ENCODE measurements at regions of chr10 and their contacts with region 1.

Region 1: DNA sequence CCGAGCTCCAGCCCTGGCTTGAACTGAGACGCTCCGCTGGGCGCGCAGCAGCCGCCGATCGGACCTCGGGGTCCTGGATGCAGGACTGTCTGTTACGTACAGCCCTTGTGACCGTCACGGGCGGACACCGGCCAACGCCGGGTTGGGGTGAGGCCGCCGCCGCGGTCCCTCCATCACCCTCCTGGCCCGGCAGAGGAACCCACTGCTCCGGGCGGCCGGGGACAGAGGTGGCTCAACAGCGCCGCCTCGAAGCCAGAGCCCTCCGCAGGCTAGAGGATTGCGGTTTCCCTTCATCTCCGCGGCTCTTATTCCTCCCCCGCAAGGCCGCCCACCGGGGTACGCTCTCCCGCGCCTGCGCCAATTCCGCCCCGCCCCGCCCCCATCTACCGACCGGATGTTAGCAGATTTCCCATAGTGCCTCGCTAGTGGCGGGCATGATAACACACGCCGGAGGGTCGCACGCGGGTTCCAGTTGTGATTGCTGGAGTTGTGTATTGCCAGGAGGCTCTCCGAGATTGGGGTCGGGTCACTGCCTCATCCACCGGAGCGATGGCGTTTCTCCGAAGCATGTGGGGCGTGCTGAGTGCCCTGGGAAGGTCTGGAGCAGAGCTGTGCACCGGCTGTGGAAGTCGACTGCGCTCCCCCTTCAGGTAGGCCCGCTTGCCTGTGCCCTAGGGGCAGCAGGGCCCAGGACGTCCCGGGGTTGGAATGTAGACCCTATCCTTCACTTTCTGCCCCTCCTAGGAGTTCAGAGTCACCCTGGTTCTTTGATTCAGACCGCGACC is at the start of gene TFAM:
- DNase-seq: peak; percentile 98
- ATAC-seq: peak; percentile 91
- H3K4me3 Mint-ChIP-seq: peak within 1 kb of the TSS; percentile 92
- H3K27ac Mint-ChIP-seq: peak within 1 kb of the TSS; percentile 96
- H3K4me1 Mint-ChIP-seq: peaks cover 42% of the 10 kb centered on the region
- H3K27me3 Mint-ChIP-seq: no peaks in the 10 kb centered on the region
- CTCF ChIP-seq: peak; percentile 56
- total RNA-seq, gene TFAM: 97.3 to 116 TPM

Region 2: DNA sequence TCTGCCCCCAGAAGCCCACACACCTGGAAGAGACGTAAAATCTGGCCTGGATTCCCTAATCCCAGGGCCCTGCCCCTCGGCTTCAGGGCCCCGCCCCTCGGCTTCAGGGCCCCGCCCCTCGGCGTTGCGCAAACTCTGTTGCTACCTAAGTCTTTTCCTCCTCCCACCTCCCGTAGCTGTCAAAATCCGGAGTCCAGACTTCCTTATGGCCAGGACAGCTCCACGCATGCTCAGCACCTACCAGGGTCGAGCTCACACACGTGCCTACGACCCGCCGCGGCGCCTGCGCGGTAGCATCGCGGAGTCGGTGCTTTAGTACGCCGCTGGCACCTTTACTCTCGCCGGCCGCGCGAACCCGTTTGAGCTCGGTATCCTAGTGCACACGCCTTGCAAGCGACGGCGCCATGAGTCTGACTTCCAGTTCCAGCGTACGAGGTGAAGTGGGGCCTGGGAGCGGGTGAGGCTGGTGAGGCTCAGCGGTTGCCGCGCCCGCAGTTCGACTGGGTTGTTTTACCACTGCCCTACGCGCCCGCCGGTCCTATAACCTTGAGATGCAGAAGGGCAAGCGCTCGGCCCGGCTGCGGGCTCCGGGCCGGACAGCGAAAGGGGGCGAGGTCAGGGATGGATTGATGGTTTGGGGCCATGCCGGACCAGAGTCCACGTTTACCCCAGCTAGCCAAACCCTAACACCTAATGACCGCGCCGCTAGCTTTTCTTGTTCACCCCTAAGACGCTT is 116.2 kb before region 1 on chr10 and contains the start of gene CISD1:
- CTCF ChIA-PET with region 1: interaction called, 5 read pairs
- POLR2A ChIA-PET with region 1: interaction called, 7 read pairs
- intact Hi-C with region 1: loop called (anchors 10 kb)
- DNase-seq: peak; percentile 96
- ATAC-seq: peak; percentile 78
- H3K4me3 Mint-ChIP-seq: peak within 1 kb of the TSS; percentile 99
- H3K27ac Mint-ChIP-seq: peak within 1 kb of the TSS; percentile 91
- H3K4me1 Mint-ChIP-seq: peaks cover 24% of the 10 kb centered on the region
- H3K27me3 Mint-ChIP-seq: no peaks in the 10 kb centered on the region
- CTCF ChIP-seq: no peak
- total RNA-seq, gene CISD1: 49.7 to 58.2 TPM

Region 3: GRCh38 chr10:58282615-58283014 is 102.6 kb before region 1 on chr10:
- CTCF ChIA-PET with region 1: no interaction called
- POLR2A ChIA-PET with region 1: no interaction called
- intact Hi-C with region 1: loop called (anchors 5 kb)
- DNase-seq: peak; percentile 51
- ATAC-seq: peak; percentile 94
- H3K4me3 Mint-ChIP-seq: peak overlapping the region; percentile 28
- H3K27ac Mint-ChIP-seq: peak overlapping the region; percentile 86
- H3K4me1 Mint-ChIP-seq: peaks cover 41% of the 10 kb centered on the region
- H3K27me3 Mint-ChIP-seq: no peaks in the 10 kb centered on the region
- CTCF ChIP-seq: no peak

Region 4: GRCh38 chr10:58291538-58292174 is 93.5 kb before region 1 on chr10:
- CTCF ChIA-PET with region 1: interaction called, 19 read pairs
- POLR2A ChIA-PET with region 1: no interaction called
- intact Hi-C with region 1: no loop called
- DNase-seq: peak; percentile 41
- ATAC-seq: peak; percentile 65
- H3K4me3 Mint-ChIP-seq: no peak overlapping the region
- H3K27ac Mint-ChIP-seq: no peak overlapping the region
- H3K4me1 Mint-ChIP-seq: no peaks in the 10 kb centered on the region
- H3K27me3 Mint-ChIP-seq: no peaks in the 10 kb centered on the region
- CTCF ChIP-seq: peak; percentile 79

Region 5: DNA sequence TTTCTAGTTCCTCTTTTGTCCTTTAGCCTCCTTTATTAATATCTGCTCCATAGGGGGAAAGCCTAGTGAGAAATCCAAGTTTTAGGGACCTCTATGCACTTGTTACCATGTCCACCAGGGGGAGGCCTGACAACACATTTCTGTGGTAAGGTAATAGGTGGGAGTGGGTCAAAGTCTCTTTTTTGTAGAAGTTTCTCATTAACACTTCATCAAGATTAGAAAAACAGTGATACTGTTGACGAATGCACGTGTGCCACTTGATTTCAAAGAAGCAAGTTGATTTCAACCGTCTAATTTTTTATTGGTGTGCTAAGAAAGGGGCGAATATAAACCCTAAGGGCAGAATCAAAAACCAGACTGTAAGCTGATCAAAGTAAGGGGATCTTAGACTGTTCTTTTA is 85.6 kb before region 1 on chr10:
- CTCF ChIA-PET with region 1: interaction called, 64 read pairs
- POLR2A ChIA-PET with region 1: interaction called, 3 read pairs
- intact Hi-C with region 1: loop called (anchors 2 kb)
- DNase-seq: peak; percentile 74
- ATAC-seq: peak; percentile 83
- H3K4me3 Mint-ChIP-seq: no peak overlapping the region
- H3K27ac Mint-ChIP-seq: no peak overlapping the region
- H3K4me1 Mint-ChIP-seq: peaks cover 2% of the 10 kb centered on the region
- H3K27me3 Mint-ChIP-seq: peaks cover 10% of the 10 kb centered on the region
- CTCF ChIP-seq: peak; percentile 85

Region 6: DNA sequence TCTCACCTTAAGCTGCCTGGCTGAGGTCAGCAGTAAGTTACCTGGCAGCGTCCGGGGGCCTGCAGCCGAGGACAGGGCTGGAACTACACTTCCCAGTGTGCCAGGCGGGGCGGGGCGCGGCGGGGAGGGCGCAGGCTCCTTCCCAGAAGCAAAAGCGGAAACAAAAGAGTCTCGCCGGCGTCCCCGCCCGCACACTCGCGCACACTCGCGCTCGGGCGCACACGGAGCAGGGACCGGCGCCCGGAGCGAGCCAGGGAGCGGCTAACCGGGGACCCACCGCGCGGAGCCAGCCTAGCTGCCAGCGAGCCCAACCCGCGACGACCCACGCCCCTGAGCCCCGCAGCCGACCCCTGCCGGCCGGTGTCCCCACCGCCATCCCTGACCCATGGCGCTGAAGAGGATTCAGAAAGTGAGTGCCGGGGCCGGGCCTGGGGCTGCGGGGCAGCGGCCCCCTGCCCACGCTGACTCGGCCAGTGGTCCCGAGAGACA is 50.3 kb before region 1 on chr10 and contains the start of gene UBE2D1:
- CTCF ChIA-PET with region 1: interaction called, 11 read pairs
- POLR2A ChIA-PET with region 1: interaction called, 3 read pairs
- intact Hi-C with region 1: loop called (anchors 5 kb)
- DNase-seq: peak; percentile 90
- ATAC-seq: peak; percentile 98
- H3K4me3 Mint-ChIP-seq: peak within 1 kb of the TSS; percentile 91
- H3K27ac Mint-ChIP-seq: peak within 1 kb of the TSS; percentile 69
- H3K4me1 Mint-ChIP-seq: peaks cover 30% of the 10 kb centered on the region
- H3K27me3 Mint-ChIP-seq: no peaks in the 10 kb centered on the region
- CTCF ChIP-seq: no peak
- total RNA-seq, gene UBE2D1: 12.1 to 12.8 TPM

Region 7: GRCh38 chr10:58543141-58543540 is 157.9 kb after region 1 on chr10:
- CTCF ChIA-PET with region 1: no interaction called
- POLR2A ChIA-PET with region 1: no interaction called
- intact Hi-C with region 1: no loop called
- DNase-seq: no peak
- ATAC-seq: no peak
- H3K4me3 Mint-ChIP-seq: no peak overlapping the region
- H3K27ac Mint-ChIP-seq: no peak overlapping the region
- H3K4me1 Mint-ChIP-seq: no peaks in the 10 kb centered on the region
- H3K27me3 Mint-ChIP-seq: no peaks in the 10 kb centered on the region
- CTCF ChIP-seq: no peak

Measured in activated CD8-positive, alpha-beta T cell treated with anti-CD3 and anti-CD28 coated beads for 36 hours (primary cell).